ENCODE measurements at regions of chr12 and their contacts with region 1.

Region 1: GRCh38 chr12:56158029-56158925 is at the start of gene MYL6:
- DNase-seq: peak; percentile 94
- CTCF ChIP-seq: no peak

Region 2: DNA sequence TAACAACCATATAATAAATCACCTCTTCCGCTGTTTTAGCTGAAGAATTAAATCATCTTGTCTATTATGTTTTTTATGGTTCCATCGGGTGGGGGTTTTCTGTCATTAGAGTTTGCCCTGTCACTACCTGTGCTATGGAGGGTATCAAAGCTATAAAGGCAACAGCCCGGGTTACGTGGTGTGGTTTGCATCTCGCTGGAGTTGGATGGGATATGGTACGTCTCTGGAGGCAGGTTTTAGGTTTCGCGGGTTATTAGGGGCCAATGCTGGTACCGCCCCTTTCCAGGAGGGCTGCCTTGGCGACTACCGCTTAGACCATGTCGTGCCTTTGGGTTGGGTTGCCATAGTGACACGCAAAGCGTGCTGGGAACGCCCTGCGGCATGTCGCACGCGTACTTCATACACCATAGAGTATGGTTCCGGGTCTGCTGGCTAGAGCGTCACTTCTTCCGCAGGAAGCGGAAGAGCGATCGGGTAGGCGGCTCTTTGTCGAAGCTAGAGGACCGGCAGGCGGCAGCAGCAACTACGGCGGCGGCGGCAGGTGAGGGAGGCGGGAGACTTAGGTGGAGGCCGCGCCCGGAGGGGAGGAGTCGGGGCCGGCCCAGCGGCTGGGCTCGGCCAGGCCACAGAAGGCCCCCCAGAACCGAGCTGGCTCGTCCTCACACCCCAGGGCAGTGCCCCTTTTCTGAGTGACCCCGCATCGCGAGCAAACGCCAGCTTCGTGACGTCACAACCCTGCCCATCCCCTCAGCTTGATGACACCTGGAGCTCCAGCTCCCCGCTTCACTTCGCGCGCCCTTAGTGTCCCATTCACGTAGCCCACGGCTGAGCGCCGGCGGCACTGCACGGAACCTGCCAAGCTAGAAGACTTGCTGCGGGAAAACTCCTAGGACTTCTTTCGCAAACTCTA is 40.2 kb before region 1 on chr12 and contains the start of gene ZC3H10:
- CTCF ChIA-PET with region 1: interaction called, 18 read pairs
- POLR2A ChIA-PET with region 1: interaction called, 3 read pairs
- DNase-seq: peak; percentile 93
- CTCF ChIP-seq: peak; percentile 62

Region 3: GRCh38 chr12:56127888-56128669 is 30.2 kb before region 1 on chr12 and contains the start of gene ESYT1:
- CTCF ChIA-PET with region 1: interaction called, 20 read pairs
- POLR2A ChIA-PET with region 1: interaction called, 15 read pairs
- DNase-seq: peak; percentile 97
- CTCF ChIP-seq: no peak

Region 4: GRCh38 chr12:56178347-56178746 is 20.1 kb after region 1 on chr12:
- CTCF ChIA-PET with region 1: interaction called, 17 read pairs
- POLR2A ChIA-PET with region 1: interaction called, 10 read pairs
- DNase-seq: no peak
- CTCF ChIP-seq: no peak

Region 5: DNA sequence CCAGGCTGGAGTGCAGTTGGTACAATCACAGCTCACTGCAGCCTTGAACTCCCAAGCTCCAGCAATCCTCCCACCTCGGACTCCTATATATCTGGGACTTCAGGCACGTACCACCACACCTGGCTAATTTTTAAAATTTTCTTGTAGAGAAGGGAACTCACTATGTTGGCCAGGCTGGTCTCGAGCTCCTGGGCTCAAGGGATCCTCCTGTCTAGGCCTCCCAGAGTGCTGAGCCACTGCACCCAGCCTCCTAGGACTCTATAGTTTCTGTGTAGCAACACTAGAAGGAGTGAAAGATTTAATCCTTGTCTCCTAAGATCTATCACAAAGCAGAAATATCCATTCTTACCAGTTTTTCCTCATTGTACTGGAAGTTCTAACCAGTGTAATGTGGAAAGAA is 208.7 kb after region 1 on chr12:
- CTCF ChIA-PET with region 1: no interaction called
- POLR2A ChIA-PET with region 1: no interaction called
- DNase-seq: no peak
- CTCF ChIP-seq: no peak

Measured in GM10248 (cell line).